Activated CD4-positive, alpha-beta T cell treated with anti-CD3 and anti-CD28 coated beads, Interleukin-2, amount 10 ng/mL, durations not matched to agents 24 days and 14 days (primary cell): ENCODE measurements at regions of chr10 and their contacts with region 1.

Region 1: DNA sequence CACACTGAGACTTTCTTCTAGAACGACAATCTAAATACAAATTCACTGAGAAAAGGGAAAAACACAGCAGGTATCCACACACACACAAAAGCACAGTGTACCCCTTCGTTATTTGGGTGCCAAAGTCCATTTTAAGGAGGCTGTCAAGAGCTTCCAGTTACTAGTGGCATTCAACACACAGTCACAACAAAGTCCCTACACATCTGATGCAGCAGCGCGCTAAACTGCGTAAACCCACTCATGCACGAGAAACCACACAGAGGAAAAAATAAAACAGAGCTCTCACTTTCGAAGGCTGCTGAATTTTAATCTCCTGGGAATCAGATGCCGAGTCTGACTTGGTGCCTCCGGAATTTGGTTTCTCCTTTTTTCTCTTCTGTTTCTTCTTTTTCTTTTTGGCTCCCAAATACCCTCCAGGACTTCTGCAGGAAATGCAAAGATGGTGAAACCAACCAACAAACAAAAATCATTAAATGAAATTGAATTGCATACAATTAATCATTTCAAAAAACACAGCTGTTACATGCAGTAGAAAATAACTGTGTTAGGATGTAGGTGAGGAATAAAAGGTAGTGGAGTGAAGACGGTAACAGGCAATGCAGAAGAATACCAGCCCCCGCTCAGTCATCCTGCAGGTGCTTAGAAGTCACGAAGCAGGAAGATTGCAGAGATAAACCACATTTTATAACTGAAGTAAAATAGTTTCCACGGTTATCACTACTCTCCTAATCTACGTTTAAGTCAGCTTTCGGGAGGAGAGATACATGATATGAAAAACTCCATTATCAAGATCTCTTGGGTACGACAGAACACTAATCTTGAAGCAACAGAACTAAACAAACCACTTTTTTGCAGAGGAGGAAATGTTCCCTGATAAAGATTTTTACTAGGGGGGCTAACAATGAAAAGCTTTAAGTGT is 27.1 kb downstream of the NMT2 start:
- DNase-seq: no peak
- H3K4me3 Mint-ChIP-seq: peak overlapping the region; percentile 56
- H3K27ac Mint-ChIP-seq: peak overlapping the region; percentile 20
- H3K4me1 Mint-ChIP-seq: peaks cover 19% of the 10 kb centered on the region
- H3K27me3 Mint-ChIP-seq: no peaks in the 10 kb centered on the region

Region 2: DNA sequence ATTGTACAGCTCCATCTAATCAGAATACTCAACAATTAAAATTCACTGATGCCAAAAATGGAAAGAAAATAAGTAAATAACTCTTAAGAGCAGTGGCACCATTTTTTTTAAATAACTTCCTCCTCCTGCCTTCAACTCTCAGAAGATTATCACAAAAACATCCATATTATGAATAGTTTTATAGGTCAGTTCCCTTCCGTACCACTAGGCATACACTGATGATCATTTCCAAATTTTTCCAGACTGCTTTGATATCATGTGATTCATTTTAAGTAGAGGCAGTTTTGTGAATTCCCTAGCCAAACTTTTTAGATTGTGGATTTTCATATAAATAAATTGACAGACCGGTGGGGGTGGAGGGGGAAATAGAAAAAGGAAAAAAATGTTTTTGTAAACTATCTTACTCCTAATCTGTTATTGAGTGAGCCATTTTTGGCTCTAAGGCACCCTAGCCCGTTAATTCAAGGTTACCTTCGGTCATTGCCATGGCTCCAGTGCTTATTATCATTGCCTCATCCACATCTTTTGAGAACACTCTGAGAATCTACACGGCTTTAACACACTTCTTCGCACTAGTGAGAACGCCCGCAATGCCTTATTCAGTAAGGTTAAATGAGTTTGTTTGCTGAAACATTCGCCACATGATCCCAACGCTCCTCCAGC is 367.7 kb before region 1 on chr10:
- intact Hi-C with region 1: no loop called
- DNase-seq: no peak
- H3K4me3 Mint-ChIP-seq: no peak overlapping the region
- H3K27ac Mint-ChIP-seq: no peak overlapping the region
- H3K4me1 Mint-ChIP-seq: peaks cover 4% of the 10 kb centered on the region
- H3K27me3 Mint-ChIP-seq: peaks cover 10% of the 10 kb centered on the region

Region 3: DNA sequence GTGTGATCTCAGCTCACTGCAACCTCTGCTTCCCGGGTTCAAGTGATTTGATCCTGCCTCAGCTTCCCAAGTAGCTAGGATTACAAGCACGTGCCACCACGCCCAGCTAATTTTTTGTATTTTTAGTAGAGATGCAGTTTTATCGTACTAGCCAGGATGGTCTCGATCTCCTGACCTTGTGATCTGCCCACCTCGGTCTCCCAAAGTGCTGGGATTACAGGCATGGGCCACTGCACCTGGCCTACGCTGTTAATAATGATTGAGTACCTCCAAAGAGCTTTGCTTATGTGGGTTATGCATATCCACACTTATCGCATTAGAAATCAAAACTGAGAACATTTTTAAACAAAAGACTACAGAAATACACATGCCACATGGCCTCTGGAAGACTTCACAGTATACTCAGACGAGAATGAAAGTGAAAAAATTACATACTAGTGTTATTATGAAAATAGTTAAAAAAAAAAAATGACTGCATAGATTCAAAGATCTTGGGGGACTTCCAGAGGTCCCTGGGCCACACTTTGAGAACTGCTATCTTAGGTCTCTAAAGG is 18.8 kb before region 1 on chr10:
- intact Hi-C with region 1: loop called (anchors 1 kb)
- DNase-seq: no peak
- H3K4me3 Mint-ChIP-seq: peak overlapping the region; percentile 39
- H3K27ac Mint-ChIP-seq: peak overlapping the region; percentile 84
- H3K4me1 Mint-ChIP-seq: peaks cover 22% of the 10 kb centered on the region
- H3K27me3 Mint-ChIP-seq: no peaks in the 10 kb centered on the region

Region 4: DNA sequence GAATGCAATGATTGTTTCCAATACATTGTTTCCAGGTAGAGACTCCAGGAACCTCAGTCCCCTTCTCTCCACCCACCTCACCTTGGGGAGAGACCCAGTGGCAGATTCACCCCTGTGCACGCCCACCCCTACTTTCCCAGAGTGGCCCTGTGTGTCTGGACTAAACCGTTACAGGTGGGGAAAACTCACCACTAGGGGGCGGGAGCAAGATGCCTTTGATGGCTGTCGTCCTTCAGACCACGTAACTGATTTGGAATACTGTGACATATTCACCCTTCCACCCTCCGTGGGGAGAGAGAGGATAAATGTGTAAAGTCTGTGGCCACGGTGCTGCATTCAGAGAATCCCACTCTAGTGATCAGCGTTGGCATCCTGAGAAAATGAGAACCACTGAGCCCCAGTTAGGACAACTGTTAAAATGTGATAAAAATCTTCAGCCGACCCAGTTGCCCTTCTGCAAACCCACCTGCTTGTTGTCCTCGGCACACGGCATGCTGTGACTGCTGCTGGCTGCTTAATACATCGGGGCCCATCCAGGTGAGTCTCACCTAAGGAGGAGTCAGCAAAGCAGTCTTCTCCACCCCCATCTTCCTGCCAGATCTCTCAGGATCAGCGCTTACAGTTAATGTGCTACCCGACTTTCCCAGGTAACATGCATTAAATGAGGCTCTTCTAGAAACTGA is 68.6 kb after region 1 on chr10:
- intact Hi-C with region 1: no loop called
- DNase-seq: peak; percentile 94
- H3K4me3 Mint-ChIP-seq: no peak overlapping the region
- H3K27ac Mint-ChIP-seq: no peak overlapping the region
- H3K4me1 Mint-ChIP-seq: peaks cover 46% of the 10 kb centered on the region
- H3K27me3 Mint-ChIP-seq: no peaks in the 10 kb centered on the region

Region 5: GRCh38 chr10:15363031-15363430 is 221.6 kb after region 1 on chr10:
- intact Hi-C with region 1: no loop called
- DNase-seq: no peak
- H3K4me3 Mint-ChIP-seq: no peak overlapping the region
- H3K27ac Mint-ChIP-seq: no peak overlapping the region
- H3K4me1 Mint-ChIP-seq: peaks cover 2% of the 10 kb centered on the region
- H3K27me3 Mint-ChIP-seq: peaks cover 45% of the 10 kb centered on the region